OCI-LY7 (cell line): ENCODE measurements at regions of chr15 and their contacts with region 1.

Region 1: GRCh38 chr15:40769274-40770146 is at the start of gene C15orf62:
- DNase-seq: peak; percentile 94
- H3K4me3 ChIP-seq: peak within 1 kb of the TSS; percentile 61
- H3K27ac ChIP-seq: peak within 1 kb of the TSS; percentile 97
- H3K4me1 ChIP-seq: peaks cover 59% of the 10 kb centered on the region
- CTCF ChIP-seq: no peak
- total RNA-seq, gene C15orf62: 4.0 and 4.7 TPM in 2 replicates

Region 2: GRCh38 chr15:40543631-40544294 is 225.7 kb before region 1 on chr15:
- CTCF ChIA-PET with region 1: no interaction called
- POLR2A ChIA-PET with region 1: no interaction called
- intact Hi-C with region 1: no loop called
- DNase-seq: peak; percentile 71
- H3K4me3 ChIP-seq: peak overlapping the region; percentile 17
- H3K27ac ChIP-seq: peak overlapping the region; percentile 51
- H3K4me1 ChIP-seq: peaks cover 22% of the 10 kb centered on the region
- CTCF ChIP-seq: no peak

Region 3: DNA sequence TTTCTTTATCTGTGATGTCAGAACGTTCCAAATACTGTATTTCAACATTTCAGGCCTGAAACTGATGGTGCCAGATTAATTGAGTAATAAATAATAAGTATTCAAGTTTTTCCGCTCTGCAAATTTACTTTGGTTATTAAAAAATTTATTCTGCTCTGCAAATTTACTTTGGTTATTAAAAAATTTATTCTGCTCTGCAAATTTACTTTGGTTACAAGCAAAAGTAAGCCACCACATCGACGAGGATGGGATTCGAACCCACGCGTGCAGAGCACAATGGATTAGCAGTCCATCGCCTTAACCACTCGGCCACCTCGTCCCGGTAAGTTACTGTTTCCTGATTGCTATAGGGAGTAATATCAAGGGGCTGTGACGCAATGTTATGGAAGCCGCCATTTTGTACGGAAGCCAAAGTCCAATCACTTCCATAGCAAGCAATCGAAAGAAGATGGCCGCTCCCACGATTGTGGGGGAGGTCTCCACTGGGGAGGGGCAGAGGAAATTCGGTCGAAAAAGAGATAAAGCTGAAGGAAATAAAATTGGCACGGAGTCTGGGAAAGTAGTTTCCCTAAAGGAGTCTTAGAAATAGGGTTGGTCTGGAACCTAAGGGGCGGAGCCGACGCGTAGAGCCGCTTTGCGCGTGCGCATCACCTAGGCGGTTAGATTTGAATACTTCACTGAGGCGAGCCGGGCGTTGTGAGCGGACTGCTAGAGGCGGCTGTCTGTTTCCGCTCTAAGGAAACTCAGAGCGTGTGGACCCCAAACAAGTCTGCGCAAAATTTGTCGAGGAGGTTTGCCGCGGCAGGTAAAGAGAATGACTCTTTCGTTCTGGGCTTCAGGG is 175.7 kb before region 1 on chr15 and contains the start of gene KNL1:
- CTCF ChIA-PET with region 1: no interaction called
- POLR2A ChIA-PET with region 1: interaction called, 3 read pairs
- intact Hi-C with region 1: loop called (anchors 5 kb)
- DNase-seq: peak; percentile 95
- H3K4me3 ChIP-seq: peak within 1 kb of the TSS; percentile 85
- H3K27ac ChIP-seq: peak within 1 kb of the TSS; percentile 90
- H3K4me1 ChIP-seq: peaks cover 49% of the 10 kb centered on the region
- CTCF ChIP-seq: no peak
- total RNA-seq, gene KNL1: 51.3 and 66.9 TPM in 2 replicates

Region 4: GRCh38 chr15:40694688-40695468 is 74.6 kb before region 1 on chr15 and contains the start of gene RAD51:
- CTCF ChIA-PET with region 1: interaction called, 3 read pairs
- POLR2A ChIA-PET with region 1: interaction called, 4 read pairs
- intact Hi-C with region 1: loop called (anchors 2 kb)
- DNase-seq: peak; percentile 96
- H3K4me3 ChIP-seq: peak within 1 kb of the TSS; percentile 94
- H3K27ac ChIP-seq: peak within 1 kb of the TSS; percentile 89
- H3K4me1 ChIP-seq: peaks cover 26% of the 10 kb centered on the region
- CTCF ChIP-seq: no peak
- total RNA-seq, gene RAD51: 45.8 and 61.9 TPM in 2 replicates

Region 5: GRCh38 chr15:40731034-40731433 is 38.5 kb before region 1 on chr15:
- CTCF ChIA-PET with region 1: no interaction called
- POLR2A ChIA-PET with region 1: no interaction called
- intact Hi-C with region 1: no loop called
- DNase-seq: no peak
- H3K4me3 ChIP-seq: no peak overlapping the region
- H3K27ac ChIP-seq: no peak overlapping the region
- H3K4me1 ChIP-seq: no peaks in the 10 kb centered on the region
- CTCF ChIP-seq: no peak

Region 6: DNA sequence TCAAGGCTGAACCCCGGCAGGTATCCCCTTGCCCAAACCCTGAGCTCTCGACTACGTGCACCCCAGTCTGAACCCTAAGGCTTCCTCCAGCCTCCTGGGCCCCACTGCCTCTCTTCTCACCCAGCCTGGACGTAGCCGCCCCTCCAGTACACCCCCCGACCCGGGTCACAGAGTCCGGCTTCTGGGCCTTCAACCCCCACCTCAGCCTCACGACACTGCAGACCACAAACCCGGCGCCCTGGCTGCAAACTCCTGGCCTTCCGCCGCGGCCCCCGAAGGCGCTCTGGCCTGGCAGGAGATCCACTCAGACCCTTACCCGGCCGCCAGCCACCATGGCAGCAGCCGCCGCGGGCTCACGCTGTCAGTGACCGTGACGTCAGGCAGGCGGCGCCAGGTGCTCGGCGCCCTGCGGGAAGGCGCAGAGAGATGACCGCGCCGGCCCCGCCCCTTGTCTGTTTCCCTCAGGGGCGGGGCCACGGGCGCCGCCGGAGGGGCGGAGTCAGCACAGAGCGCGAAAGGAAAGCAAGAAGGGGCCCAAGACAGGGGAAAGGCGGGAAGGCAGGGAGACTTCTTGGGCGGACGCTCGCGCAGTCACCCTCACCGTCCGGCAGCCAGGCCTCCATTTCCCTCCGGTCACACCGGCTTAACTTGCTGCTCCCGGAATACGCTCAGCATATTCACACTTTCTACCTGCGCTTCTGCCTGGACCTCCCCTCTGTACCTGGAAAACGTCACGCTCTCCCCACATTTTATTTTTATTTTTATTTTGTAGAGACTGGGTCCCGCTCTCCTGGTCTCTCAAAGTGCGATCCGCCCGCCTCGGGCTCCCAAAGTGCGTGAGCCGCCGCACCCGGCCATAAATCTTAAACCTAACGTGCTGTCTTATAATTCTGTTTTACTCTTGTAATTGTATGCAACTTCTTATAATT is 14.4 kb before region 1 on chr15 and contains the start of gene RMDN3:
- CTCF ChIA-PET with region 1: interaction called, 5 read pairs
- POLR2A ChIA-PET with region 1: interaction called, 11 read pairs
- intact Hi-C with region 1: loop called (anchors 1 kb)
- DNase-seq: peak; percentile 97
- H3K4me3 ChIP-seq: peak within 1 kb of the TSS; percentile 85
- H3K27ac ChIP-seq: peak within 1 kb of the TSS; percentile 90
- H3K4me1 ChIP-seq: peaks cover 52% of the 10 kb centered on the region
- CTCF ChIP-seq: no peak
- total RNA-seq, gene RMDN3: 10.7 and 14.9 TPM in 2 replicates

Region 7: DNA sequence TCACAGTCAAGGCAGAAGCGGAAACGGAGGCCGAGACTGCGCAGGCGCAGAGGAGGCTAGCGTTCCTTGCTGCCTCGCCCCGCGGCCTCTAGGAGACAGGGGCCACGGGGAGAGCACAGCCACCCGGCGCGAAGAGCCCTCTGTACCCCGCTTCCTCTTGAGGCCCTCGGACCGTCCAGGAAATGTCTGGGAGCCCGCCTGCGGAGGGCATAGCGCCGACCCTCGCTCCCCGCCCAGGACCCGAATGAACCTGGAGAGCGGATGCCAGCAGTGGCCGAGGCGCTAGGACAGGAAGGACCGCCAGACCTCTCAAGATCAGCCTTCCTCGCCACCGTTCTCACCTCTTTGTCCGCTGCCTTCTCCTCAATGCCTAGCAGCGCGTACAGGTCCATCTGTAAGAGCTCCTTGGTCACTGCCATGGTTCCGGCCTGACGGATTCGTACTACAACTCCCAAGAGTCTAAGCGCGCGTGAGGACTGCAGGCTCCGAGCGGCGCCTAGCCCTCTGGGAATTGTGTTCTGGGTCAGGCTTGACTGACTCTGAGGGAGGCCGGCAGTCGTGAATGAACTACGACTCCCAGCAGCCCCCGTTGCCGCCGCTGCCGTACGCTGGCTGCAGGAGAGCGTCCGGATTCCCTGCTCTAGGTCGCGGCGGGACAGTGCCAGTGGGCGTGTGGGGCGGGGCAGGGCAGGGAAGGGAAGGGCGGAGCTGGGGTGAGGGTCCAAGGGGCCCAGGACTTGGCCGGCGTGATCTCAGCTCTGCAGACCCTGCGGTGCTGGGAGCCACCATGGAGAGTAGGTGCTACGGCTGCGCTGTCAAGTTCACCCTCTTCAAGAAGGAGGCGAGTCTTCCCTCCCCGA is 37.7 kb after region 1 on chr15 and contains the starts of genes DNAJC17 and ZFYVE19:
- CTCF ChIA-PET with region 1: no interaction called
- POLR2A ChIA-PET with region 1: interaction called, 4 read pairs
- intact Hi-C with region 1: loop called (anchors 2 kb)
- DNase-seq: peak; percentile 99
- H3K4me3 ChIP-seq: peak within 1 kb of the TSS; percentile 78
- H3K27ac ChIP-seq: peak within 1 kb of the TSS; percentile 76
- H3K4me1 ChIP-seq: peaks cover 19% of the 10 kb centered on the region
- CTCF ChIP-seq: no peak
- total RNA-seq, gene DNAJC17: 24.2 and 39.2 TPM in 2 replicates
- total RNA-seq, gene ZFYVE19: 24.3 and 29.3 TPM in 2 replicates